ENCODE measurements at regions of chr2 and their contacts with region 1.

Region 1: GRCh38 chr2:60385648-60386047 is 167.8 kb downstream of the BCL11A start:
- DNase-seq: no peak
- H3K4me3 ChIP-seq: no peak overlapping the region
- H3K27me3 ChIP-seq: no peaks in the 10 kb centered on the region
- CTCF ChIP-seq: no peak

Region 2: DNA sequence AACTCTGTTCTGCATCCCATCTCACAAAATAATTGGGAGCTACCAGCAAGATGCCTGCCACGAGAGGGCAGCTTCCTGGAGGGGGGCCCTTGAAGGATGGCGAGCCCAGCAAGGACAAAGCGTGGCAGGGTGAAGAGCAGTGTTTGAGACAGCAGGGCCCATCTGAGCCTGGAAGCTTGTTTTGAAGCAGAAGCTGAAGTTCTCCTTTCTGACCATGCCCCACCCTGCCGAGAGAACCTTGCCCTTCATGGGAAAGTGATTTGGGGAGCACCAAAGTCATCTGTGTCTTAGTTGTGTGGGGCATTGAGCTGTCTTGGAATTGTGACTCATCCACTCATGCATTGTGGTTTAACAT is 48.5 kb before region 1 on chr2:
- CTCF ChIA-PET with region 1: no interaction called
- POLR2A ChIA-PET with region 1: no interaction called
- DNase-seq: no peak
- H3K4me3 ChIP-seq: no peak overlapping the region
- H3K27me3 ChIP-seq: no peaks in the 10 kb centered on the region
- CTCF ChIP-seq: peak; percentile 30; the same call in 1 of the 2 replicates

Region 3: GRCh38 chr2:60408207-60408606 is 22.6 kb after region 1 on chr2:
- CTCF ChIA-PET with region 1: no interaction called
- POLR2A ChIA-PET with region 1: interaction called, 13 read pairs
- DNase-seq: no peak
- H3K4me3 ChIP-seq: no peak overlapping the region
- H3K27me3 ChIP-seq: no peaks in the 10 kb centered on the region; the same call in 1 of the 2 replicates
- CTCF ChIP-seq: no peak